ENCODE measurements at regions of chr4 and their contacts with region 1.

Region 1: DNA sequence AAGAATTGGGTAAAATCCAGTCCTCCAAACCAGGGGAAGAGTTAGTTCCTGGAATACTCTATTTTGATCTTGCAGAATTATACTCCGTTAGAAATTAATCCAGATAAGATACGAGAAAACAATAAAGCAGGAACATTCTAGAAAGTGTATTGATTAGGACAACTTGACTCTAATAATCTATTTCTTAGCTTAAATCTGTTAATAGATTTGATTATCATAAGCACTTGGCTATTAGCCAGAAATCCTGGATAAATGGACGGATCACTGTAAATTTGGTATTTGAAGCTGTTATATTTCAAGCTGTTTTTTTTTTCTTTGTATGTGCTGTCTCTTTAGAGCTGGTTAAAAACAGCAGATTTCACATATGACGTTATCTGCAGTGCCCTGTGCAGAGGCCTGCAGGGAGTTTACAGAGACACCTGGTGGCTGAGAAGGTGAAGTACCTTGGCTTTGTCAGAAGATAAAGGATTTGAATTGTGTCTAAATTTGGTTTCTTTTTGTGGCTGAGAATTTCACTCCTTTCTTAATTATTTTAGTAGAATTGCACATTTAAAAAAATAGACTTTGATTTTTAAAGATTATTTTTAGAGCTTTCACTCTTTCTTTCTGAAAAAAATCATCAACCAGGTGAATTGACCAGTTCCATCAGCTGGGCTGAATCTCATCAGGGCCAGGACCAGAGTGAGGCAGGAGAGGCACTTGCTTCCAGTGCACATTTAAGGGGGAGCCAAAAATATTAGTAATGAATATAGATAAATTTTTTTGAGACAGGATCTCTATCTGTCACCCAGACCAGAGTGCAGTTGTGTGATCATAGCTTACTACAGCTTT is 9.7 kb upstream of the CHRNA9 start:
- DNase-seq: peak in 4 of 5 donors; percentile 29 to 53 (median 36)
- H3K4me3 ChIP-seq: no peak overlapping the region
- H3K27ac ChIP-seq: no peak overlapping the region
- H3K4me1 ChIP-seq: peaks cover 4% of the 10 kb centered on the region
- H3K27me3 ChIP-seq: no peaks in the 10 kb centered on the region
- CTCF ChIP-seq: peak; percentile 48 to 75 (median 52)
- EP300 ChIP-seq: no peak
- POLR2A ChIP-seq: no peak

Region 2: DNA sequence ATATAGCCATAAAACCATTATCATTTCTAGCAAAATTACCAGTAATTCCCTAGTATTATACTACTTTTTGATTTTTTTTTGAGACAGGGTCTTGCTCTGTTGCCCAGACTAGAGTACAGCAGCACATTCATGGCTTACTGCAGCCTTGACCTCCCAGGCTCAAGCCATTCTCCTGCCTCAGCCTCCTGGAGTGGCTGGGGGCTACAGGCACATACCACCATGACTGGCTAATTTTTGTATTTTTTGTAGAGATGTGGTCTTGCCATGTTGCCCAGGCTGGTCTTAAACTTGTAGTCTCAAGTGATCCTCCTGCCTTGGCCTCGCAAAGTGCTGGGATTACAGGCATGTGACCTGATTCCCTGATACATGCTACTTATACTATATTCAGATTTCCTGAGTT is 255.0 kb before region 1 on chr4:
- intact Hi-C with region 1: no loop called
- DNase-seq: no peak
- H3K4me3 ChIP-seq: no peak overlapping the region
- H3K27ac ChIP-seq: no peak overlapping the region
- H3K4me1 ChIP-seq: peaks cover 5% of the 10 kb centered on the region
- H3K27me3 ChIP-seq: no peaks in the 10 kb centered on the region
- CTCF ChIP-seq: no peak
- EP300 ChIP-seq: no peak
- POLR2A ChIP-seq: no peak

Region 3: DNA sequence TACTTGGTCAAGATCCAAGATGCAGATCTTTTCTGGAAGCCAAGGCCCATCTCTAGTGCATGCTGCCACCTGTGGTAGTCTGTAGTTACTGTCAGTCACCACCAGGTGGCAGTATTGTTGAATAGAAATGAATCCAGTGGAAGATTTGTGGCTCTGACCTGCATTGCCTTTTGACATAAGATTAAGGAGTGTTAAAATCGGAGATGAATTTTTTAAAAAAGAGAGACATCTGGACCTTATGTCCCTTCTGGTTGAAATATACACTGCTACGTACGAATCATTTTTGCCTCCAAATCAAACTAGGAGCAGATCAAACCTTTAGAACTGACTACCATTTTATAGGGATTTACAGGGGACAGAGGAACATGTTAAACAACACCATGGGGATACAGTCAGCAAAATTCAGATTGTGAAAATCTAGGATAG is 175.4 kb before region 1 on chr4:
- intact Hi-C with region 1: loop called in 1 of 4 experiments (anchors 10 kb)
- DNase-seq: peak in 3 of 5 donors; percentile 24 to 63 (median 37)
- H3K4me3 ChIP-seq: no peak overlapping the region
- H3K27ac ChIP-seq: no peak overlapping the region
- H3K4me1 ChIP-seq: no peaks in the 10 kb centered on the region
- H3K27me3 ChIP-seq: no peaks in the 10 kb centered on the region
- CTCF ChIP-seq: peak; percentile 46 to 64 (median 62)
- EP300 ChIP-seq: no peak
- POLR2A ChIP-seq: no peak

Region 4: DNA sequence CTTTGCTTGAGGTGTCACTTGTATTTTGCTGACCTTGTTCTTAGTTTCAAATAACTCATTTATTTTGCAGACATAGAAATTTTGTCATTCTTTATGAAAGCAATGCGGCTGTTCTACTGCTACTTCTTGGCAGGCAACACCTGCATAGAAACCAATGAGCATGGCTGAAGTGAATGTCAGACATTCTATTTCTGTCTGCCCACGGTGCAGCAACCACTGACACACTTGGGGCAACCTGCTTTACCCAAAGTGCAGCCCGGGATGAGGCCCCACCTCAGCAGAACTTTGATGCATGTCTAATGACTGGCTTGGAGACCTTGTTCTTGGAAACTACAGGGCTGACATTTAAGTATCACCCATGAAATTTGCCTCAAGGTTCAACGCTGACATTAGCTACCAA is 210.6 kb after region 1 on chr4:
- intact Hi-C with region 1: loop called in 1 of 4 experiments (anchors 10 kb)
- DNase-seq: no peak
- H3K4me3 ChIP-seq: no peak overlapping the region
- H3K27ac ChIP-seq: no peak overlapping the region
- H3K4me1 ChIP-seq: no peaks in the 10 kb centered on the region
- H3K27me3 ChIP-seq: no peaks in the 10 kb centered on the region
- CTCF ChIP-seq: no peak
- EP300 ChIP-seq: no peak
- POLR2A ChIP-seq: no peak